ENCODE measurements at regions of chr4 and their contacts with region 1.

Region 1: DNA sequence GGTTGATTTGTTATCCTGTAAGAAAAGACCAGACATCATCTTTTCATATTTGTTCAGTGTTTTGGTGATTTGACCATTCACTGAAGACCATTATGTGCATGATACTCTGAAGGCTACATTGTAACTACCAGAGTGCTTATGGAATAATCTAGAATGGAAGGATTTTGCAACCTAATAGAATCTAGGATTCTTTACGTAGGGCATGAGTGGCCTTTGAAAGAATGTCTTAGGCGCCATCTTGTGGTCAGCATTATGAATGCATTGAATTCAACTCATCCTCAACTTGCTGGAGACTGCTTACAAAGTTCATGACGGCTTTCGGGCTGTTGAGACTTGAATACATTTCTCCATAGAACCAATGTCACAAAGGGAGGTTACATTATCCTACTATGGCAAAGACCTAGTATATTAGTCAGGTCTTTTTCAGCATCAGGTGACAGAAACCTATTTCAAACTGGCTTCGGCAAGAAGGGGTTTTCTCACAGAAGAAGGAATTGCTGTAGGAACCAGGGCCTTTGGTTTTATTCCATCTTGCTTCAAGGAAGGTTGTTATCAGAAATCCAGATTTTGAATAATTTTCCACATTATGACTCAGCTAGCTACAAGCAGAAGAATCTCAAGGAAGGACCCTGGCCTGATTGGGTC is 104.1 kb downstream of the GPAT3 start:
- DNase-seq: peak; percentile 63
- H3K4me3 Mint-ChIP-seq: no peak overlapping the region
- H3K27ac Mint-ChIP-seq: no peak overlapping the region
- H3K4me1 Mint-ChIP-seq: no peaks in the 10 kb centered on the region
- H3K27me3 Mint-ChIP-seq: peaks cover 24% of the 10 kb centered on the region
- CTCF ChIP-seq: no peak

Region 2: DNA sequence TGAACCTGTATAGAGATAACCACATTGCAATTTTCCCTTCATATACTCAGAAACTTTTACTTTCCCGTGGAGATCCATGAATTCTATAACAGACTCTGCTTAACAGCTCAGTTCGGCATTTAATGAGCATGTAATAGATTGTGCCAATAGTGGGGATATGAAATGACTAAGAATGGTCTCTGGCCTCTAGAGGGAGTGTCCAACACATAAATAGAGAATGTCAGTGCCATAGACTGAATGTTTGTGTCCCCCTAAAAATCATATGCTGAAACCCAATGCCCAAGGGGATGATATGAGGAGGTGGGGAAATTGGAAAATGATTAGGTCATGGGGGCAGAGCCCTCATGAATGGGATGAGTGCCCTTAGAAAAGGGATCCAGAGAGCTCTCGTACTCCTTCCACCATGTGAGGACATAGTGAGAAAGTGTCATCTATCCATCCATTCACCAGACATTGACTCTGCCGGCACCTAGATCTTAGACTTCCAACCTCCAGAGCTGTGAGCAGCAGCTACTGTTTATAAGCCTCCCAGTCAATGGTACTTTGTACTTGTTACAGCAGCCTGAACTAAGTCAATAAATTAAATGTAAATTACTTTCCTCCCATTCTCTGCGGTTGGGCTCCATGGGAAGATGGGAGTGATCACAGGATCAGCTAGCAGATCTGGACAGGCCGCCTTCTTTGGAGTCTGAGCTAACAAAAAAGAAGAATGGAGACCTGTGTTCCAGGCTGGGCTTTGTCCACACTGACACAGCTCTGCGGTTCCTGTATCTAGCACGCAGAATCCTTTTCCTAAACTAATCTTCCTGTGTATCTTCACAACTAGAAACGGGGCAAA is 277.3 kb before region 1 on chr4:
- CTCF ChIA-PET with region 1: no interaction called
- intact Hi-C with region 1: loop called (anchors 10 kb)
- DNase-seq: no peak
- H3K4me3 Mint-ChIP-seq: no peak overlapping the region
- H3K27ac Mint-ChIP-seq: no peak overlapping the region
- H3K4me1 Mint-ChIP-seq: peaks cover 10% of the 10 kb centered on the region
- H3K27me3 Mint-ChIP-seq: no peaks in the 10 kb centered on the region
- CTCF ChIP-seq: no peak

Region 3: GRCh38 chr4:83490876-83491450 is 149.0 kb before region 1 on chr4:
- CTCF ChIA-PET with region 1: no interaction called
- intact Hi-C with region 1: loop called (anchors 1 kb)
- DNase-seq: peak; percentile 14
- H3K4me3 Mint-ChIP-seq: no peak overlapping the region
- H3K27ac Mint-ChIP-seq: no peak overlapping the region
- H3K4me1 Mint-ChIP-seq: no peaks in the 10 kb centered on the region
- H3K27me3 Mint-ChIP-seq: no peaks in the 10 kb centered on the region
- CTCF ChIP-seq: peak; percentile 46

Region 4: DNA sequence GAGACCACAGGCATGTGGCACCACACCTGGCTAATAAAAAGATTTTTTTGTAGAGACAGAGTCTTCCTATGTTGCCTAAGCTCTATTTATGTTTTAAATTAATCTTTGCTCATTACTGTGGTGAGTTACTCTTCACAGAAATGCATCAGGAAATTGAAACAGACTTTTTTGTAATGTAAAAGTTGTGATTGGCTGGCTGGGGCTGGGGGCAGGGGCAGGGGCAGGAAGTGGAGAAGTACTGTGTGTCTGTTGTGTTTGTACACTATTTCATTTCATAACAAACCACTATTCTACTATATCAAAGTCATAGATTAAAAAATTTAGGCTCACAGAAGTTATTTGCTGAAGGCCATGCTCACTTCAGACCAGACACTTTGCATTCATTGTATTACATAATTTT is 136.0 kb before region 1 on chr4:
- CTCF ChIA-PET with region 1: interaction called, 3 read pairs
- intact Hi-C with region 1: loop called (anchors 1 kb)
- DNase-seq: no peak
- H3K4me3 Mint-ChIP-seq: no peak overlapping the region
- H3K27ac Mint-ChIP-seq: no peak overlapping the region
- H3K4me1 Mint-ChIP-seq: no peaks in the 10 kb centered on the region
- H3K27me3 Mint-ChIP-seq: no peaks in the 10 kb centered on the region
- CTCF ChIP-seq: no peak

Region 5: DNA sequence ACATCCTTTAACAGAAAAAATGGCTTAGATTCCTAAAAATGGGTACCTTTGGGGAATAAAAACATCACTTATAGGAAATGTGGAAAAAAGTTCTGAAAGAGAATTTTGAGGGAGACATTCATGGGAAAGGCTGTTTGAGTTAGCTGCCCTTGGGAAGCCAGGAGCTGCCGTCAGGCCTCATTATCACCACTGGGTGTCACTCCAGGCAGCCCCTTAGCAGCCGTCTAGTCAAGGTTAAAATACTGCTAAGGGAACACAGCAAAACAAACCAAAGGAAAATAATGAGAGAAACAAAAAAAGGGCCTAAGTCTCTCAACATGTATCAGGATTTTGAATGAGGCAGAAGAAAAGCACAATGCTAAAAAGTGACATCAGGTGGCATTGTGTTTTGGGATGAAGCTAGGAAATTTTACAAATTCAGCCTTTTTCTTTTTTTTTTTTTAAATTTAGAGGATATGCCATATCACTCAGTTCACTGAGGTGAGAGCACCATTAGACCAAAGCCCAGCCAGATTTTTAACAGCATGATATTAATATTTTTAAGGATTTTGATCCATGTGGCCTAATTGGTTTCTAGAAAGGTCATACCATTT is 131.2 kb after region 1 on chr4:
- CTCF ChIA-PET with region 1: no interaction called
- intact Hi-C with region 1: loop called (anchors 5 kb)
- DNase-seq: peak; percentile 38
- H3K4me3 Mint-ChIP-seq: no peak overlapping the region
- H3K27ac Mint-ChIP-seq: no peak overlapping the region
- H3K4me1 Mint-ChIP-seq: no peaks in the 10 kb centered on the region
- H3K27me3 Mint-ChIP-seq: no peaks in the 10 kb centered on the region
- CTCF ChIP-seq: peak; percentile 46

Region 6: DNA sequence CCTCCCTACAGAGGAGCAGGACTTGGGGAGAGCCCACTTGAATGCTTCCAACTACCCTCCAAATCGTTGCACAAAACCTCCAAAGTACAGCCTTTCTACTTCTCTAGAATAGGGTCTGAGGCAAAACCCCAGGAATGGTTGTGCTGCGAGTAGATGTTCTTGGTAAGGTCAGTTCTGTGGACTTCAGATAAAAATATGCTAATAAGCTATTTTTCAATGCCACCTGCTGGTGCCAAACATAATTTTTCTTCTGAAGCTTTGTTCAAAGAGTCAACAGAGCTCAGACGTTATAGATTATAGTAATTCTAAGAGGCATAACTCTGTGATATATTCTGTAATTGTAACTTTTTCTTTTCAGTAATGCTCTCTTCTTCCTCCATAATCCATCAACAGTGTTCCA is 321.6 kb after region 1 on chr4:
- CTCF ChIA-PET with region 1: interaction called, 12 read pairs
- intact Hi-C with region 1: loop called (anchors 5 kb)
- DNase-seq: peak; percentile 2
- H3K4me3 Mint-ChIP-seq: no peak overlapping the region
- H3K27ac Mint-ChIP-seq: no peak overlapping the region
- H3K4me1 Mint-ChIP-seq: no peaks in the 10 kb centered on the region
- H3K27me3 Mint-ChIP-seq: peaks cover 8% of the 10 kb centered on the region
- CTCF ChIP-seq: no peak

Region 7: DNA sequence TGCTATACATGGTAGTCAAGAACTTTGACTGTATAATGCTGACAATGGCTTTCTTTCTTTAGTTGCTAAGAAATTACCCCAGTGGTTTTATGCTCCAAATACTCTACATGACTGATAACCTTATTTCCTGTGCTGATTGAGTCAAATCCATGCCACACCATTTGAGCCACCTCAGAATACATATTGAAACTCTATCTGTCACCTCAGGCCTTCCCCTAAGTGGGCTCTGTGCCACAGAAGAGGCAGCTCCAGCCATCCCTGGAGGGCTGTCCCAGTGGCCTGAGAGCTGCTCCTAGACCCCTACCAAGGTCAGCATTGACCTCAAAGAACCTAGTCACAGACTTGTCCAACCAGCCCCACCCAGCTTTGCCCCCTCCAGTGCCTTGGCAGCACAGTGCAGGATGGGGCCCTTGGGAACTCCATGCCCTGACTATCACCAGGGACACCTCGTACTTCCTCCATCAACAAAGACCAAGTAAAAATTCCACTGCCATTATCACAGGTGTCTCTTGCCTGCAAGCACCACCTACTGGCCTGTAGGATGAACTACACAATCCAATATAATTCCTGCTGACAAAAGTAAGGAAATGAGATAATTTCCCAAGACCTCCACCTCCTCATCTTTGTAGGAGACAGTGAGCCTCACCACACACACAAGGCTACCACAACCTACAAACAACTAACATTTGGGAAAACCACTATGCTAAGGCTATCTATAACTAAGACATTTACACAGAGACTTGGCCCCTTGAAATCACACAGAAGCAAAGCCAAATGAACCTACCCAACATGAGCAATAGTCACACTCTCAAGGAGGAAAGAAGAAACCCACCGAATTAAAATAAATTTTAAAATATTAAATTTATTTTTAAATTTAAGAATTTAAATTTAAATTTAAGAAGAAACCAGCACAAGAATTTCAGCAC is 619.2 kb after region 1 on chr4:
- CTCF ChIA-PET with region 1: no interaction called
- intact Hi-C with region 1: loop called (anchors 1 kb)
- DNase-seq: peak; percentile 7
- H3K4me3 Mint-ChIP-seq: no peak overlapping the region
- H3K27ac Mint-ChIP-seq: no peak overlapping the region
- H3K4me1 Mint-ChIP-seq: no peaks in the 10 kb centered on the region
- H3K27me3 Mint-ChIP-seq: peaks cover 29% of the 10 kb centered on the region
- CTCF ChIP-seq: no peak

Measured in Calu3 (cell line).